ENCODE measurements at regions of chr15 and their contacts with region 1.

Region 1: DNA sequence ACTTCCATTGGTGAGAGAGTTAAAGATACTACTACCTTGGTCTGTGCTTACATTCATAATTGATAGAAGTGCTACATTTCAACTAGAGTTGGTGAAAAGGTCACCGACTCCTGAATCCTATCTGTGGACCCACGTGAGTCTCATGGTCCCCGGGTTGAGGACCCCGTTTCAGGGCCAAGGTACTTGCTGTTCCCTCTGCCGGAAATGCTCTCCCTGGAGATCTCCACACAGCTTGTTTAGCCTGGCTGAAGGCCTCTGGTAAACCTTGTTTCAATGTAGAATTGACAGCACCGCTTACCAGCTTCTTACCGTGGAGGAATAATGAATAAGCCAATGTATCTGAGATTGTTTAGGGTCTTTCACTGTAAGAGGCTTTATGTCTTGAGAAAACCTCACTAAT is 226.0 kb upstream of the GOLGA6L4 start:
- DNase-seq: no peak
- ATAC-seq: peak; percentile 71

Region 2: GRCh38 chr15:83398626-83399025 is 611.0 kb before region 1 on chr15:
- intact Hi-C with region 1: no loop called
- DNase-seq: no peak
- ATAC-seq: no peak

Region 3: DNA sequence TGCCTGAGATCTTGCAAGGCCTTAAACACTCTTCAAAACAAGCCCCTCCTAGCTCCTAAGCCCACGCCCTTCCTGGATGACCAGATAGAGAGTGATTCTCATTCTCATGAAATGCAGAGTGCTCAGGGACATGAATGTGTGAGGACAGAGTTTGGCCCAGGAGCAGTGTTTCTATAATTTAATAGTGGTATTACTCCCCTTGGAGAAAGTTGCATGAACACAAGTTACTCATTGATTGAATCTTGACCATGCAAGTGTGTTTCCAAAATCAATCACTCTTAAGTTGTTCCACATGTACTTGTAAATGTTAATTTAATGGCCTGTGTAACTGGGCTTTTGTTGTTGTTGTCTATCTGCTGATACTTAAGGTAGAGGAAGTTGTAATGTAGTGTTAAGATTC is 174.1 kb before region 1 on chr15:
- intact Hi-C with region 1: no loop called
- DNase-seq: no peak
- ATAC-seq: peak; percentile 87

Region 4: DNA sequence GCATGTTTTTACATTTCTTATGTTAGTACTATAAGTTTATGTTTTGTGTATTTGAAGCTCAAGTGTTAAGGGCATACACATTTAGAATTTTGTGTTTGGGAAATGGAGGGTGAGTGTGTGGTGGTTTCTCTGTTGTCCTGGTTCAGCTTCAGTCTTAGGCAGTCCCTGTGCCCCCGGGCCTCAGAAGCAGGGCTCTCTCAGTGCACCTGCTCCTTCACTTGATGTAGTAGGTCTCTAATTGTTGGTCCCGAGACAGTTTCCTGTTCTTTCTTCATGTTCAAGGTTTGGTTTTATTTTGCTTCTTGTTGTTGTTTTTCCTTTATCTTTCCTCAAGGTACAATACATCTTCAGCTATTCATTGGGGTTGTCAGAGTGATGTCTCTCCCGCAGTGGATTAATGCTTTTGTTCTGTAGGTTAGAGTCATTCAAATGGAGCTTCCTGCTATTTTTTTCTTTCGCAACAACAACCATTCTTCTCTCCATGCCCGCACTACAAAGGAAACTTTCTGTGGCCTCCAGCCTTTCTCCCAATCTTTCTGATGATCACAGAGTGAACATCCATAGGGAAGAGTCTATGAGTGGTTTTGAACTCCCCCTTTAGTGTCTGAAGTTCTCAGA is 48.2 kb after region 1 on chr15:
- intact Hi-C with region 1: loop called (anchors 2 kb)
- DNase-seq: no peak
- ATAC-seq: no peak